Psoas muscle (tissue), 8 donors: ENCODE measurements at regions of chr4 and their contacts with region 1.

Region 1: GRCh38 chr4:73258686-73259570 is at the start of gene ANKRD17:
- DNase-seq: peak; percentile 94 to 96
- ATAC-seq: peak; percentile 89 to 91 (median 90)
- H3K4me3 ChIP-seq: peak within 1 kb of the TSS; percentile 72
- H3K27ac ChIP-seq: peak within 1 kb of the TSS; percentile 94
- H3K4me1 ChIP-seq: peaks cover 45% of the 10 kb centered on the region
- H3K27me3 ChIP-seq: no peaks in the 10 kb centered on the region
- CTCF ChIP-seq: no peak
- total RNA-seq, gene ANKRD17: 46.6 to 66.2 (median 57.4) TPM

Region 2: GRCh38 chr4:72701987-72702819 is 556.7 kb before region 1 on chr4:
- intact Hi-C with region 1: loop called in 1 of 2 experiments (anchors 10 kb)
- DNase-seq: no peak
- ATAC-seq: peak in 2 of 4 donors; percentile 43 to 52
- H3K4me3 ChIP-seq: peak overlapping the region; percentile 58
- H3K27ac ChIP-seq: no peak overlapping the region
- H3K4me1 ChIP-seq: no peaks in the 10 kb centered on the region
- H3K27me3 ChIP-seq: no peaks in the 10 kb centered on the region
- CTCF ChIP-seq: peak; percentile 60

Region 3: DNA sequence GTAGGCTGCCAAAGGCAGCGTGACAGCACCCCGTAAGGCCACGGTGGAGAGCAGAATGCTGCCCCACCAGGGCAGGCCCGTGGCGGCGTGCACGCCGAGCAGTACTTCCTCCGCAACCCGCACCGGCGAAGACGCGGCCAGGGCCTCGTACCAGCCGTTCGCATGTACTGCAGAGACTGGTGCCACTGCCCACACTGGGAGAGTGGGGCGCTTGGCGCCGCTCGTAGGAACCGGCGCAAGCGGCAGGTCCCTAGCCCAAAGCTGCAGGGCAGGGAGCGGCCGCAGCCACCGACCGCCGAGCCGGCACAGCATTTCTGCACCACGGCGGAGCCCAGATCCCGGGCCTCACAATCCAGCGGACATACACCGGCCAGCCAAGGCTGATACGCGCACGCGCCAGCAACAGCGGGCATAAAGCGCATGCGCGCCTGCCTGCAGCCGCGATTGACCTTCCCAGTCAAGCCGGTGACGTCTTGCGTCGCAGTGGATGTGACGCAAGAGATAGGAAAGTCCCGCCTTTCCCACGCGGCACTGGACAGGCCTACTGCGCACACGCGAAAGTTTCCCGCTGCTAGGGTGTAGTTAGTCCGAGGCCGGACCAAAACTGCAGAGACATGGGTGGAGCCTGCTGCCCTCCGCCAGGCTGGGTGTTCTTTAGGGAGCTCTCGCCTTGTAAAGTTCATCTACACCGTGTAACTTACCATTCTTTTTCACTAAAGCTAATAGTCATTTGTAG is 189.4 kb before region 1 on chr4 and contains the start of gene COX18:
- intact Hi-C with region 1: loop called (anchors 1 to 2 kb)
- DNase-seq: peak; percentile 97 to 99
- ATAC-seq: peak; percentile 92 to 97 (median 94)
- H3K4me3 ChIP-seq: peak within 1 kb of the TSS; percentile 89
- H3K27ac ChIP-seq: peak within 1 kb of the TSS; percentile 96
- H3K4me1 ChIP-seq: peaks cover 8% of the 10 kb centered on the region
- H3K27me3 ChIP-seq: no peaks in the 10 kb centered on the region
- CTCF ChIP-seq: no peak
- total RNA-seq, gene COX18: 5.8 to 9.2 (median 9.0) TPM

Region 4: GRCh38 chr4:73133784-73134183 is 125.1 kb before region 1 on chr4:
- intact Hi-C with region 1: loop called in 1 of 2 experiments (anchors 5 kb)
- DNase-seq: no peak
- ATAC-seq: peak; percentile 79 to 87 (median 82)
- H3K4me3 ChIP-seq: no peak overlapping the region
- H3K27ac ChIP-seq: peak overlapping the region; percentile 69
- H3K4me1 ChIP-seq: peaks cover 2% of the 10 kb centered on the region
- H3K27me3 ChIP-seq: no peaks in the 10 kb centered on the region
- CTCF ChIP-seq: no peak

Region 5: GRCh38 chr4:73142995-73143547 is 115.9 kb before region 1 on chr4:
- intact Hi-C with region 1: loop called in 1 of 2 experiments (anchors 5 kb)
- DNase-seq: no peak
- ATAC-seq: no peak
- H3K4me3 ChIP-seq: no peak overlapping the region
- H3K27ac ChIP-seq: no peak overlapping the region
- H3K4me1 ChIP-seq: peaks cover 6% of the 10 kb centered on the region
- H3K27me3 ChIP-seq: no peaks in the 10 kb centered on the region
- CTCF ChIP-seq: peak; percentile 10

Region 6: GRCh38 chr4:73222466-73223257 is 36.3 kb before region 1 on chr4:
- intact Hi-C with region 1: loop called in 1 of 2 experiments (anchors 5 kb)
- DNase-seq: no peak
- ATAC-seq: peak; percentile 99 to 100 (median 100)
- H3K4me3 ChIP-seq: peak overlapping the region; percentile 71
- H3K27ac ChIP-seq: peak overlapping the region; percentile 96
- H3K4me1 ChIP-seq: peaks cover 40% of the 10 kb centered on the region
- H3K27me3 ChIP-seq: no peaks in the 10 kb centered on the region
- CTCF ChIP-seq: no peak

Region 7: DNA sequence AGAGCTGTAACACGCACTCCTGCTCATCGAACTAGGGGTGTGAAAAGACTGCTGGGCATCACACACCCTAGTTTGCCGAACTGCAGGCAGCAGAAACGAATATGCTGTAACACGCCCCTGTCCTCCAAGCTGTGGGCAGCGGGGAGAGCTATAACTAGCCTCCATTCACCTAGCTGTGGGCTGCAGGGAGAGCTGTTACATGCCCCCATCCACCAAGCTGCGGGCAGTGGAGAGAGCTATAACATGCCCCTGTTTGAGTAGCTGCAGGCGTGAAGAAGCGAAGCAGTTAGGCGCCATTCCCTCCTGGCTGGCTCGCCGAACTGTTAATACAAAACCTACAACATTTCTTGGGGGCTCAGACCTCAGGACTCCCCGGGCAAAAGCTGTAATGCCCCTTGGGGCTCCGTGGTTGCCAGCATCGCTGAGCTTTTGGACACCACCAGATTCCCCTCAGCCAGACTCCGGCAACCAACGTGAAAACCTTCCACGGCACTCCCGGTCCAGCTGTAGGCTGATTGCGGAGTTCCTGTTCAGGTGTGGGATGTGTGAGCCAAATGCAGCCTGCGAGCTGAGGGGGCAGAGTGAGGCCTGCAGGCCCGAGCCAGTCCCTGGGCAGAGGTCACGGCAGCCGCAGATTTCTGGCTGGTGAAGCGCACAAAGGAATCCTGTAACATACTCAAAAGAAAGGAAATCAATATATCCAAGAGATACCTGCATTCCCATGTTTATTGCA is 40.8 kb after region 1 on chr4:
- intact Hi-C with region 1: no loop called
- DNase-seq: no peak
- ATAC-seq: no peak
- H3K4me3 ChIP-seq: no peak overlapping the region
- H3K27ac ChIP-seq: no peak overlapping the region
- H3K4me1 ChIP-seq: no peaks in the 10 kb centered on the region
- H3K27me3 ChIP-seq: no peaks in the 10 kb centered on the region
- CTCF ChIP-seq: no peak

Region 8: GRCh38 chr4:73329300-73329699 is 70.4 kb after region 1 on chr4:
- intact Hi-C with region 1: no loop called
- DNase-seq: no peak
- ATAC-seq: no peak
- H3K4me3 ChIP-seq: no peak overlapping the region
- H3K27ac ChIP-seq: no peak overlapping the region
- H3K4me1 ChIP-seq: no peaks in the 10 kb centered on the region
- H3K27me3 ChIP-seq: no peaks in the 10 kb centered on the region
- CTCF ChIP-seq: no peak

Region 9: GRCh38 chr4:74157561-74158465 is 898.9 kb after region 1 on chr4 and contains the start of gene MTHFD2L:
- intact Hi-C with region 1: loop called in 1 of 2 experiments (anchors 2 kb)
- DNase-seq: peak; percentile 95 to 97
- ATAC-seq: peak; percentile 98 to 99 (median 98)
- H3K4me3 ChIP-seq: peak within 1 kb of the TSS; percentile 69
- H3K27ac ChIP-seq: peak within 1 kb of the TSS; percentile 90
- H3K4me1 ChIP-seq: peaks cover 23% of the 10 kb centered on the region
- H3K27me3 ChIP-seq: no peaks in the 10 kb centered on the region
- CTCF ChIP-seq: no peak
- total RNA-seq, gene MTHFD2L: 6.4 to 10.4 (median 9.7) TPM